Body of pancreas (tissue), 4 donors: ENCODE measurements at regions of chr14 and their contacts with region 1.

Region 1: GRCh38 chr14:51776102-51776894 is 84.1 kb upstream of the GNG2 start:
- DNase-seq: peak; percentile 27 to 49 (median 40)
- ATAC-seq: peak; percentile 50
- H3K4me3 ChIP-seq: no peak overlapping the region
- H3K27ac ChIP-seq: no peak overlapping the region
- H3K4me1 ChIP-seq: peaks cover 5% of the 10 kb centered on the region
- H3K27me3 ChIP-seq: no peaks in the 10 kb centered on the region
- CTCF ChIP-seq: peak; percentile 15 to 56 (median 42)
- POLR2A ChIP-seq: no peak

Region 2: GRCh38 chr14:51285120-51285519 is 491.2 kb before region 1 on chr14:
- intact Hi-C with region 1: loop called (anchors 5 kb)
- DNase-seq: no peak
- ATAC-seq: no peak
- H3K4me3 ChIP-seq: no peak overlapping the region
- H3K27ac ChIP-seq: no peak overlapping the region
- H3K4me1 ChIP-seq: no peaks in the 10 kb centered on the region
- H3K27me3 ChIP-seq: no peaks in the 10 kb centered on the region
- CTCF ChIP-seq: no peak
- POLR2A ChIP-seq: no peak

Region 3: GRCh38 chr14:51369814-51370213 is 406.5 kb before region 1 on chr14:
- intact Hi-C with region 1: loop called (anchors 5 kb)
- DNase-seq: peak in 3 of 4 donors; percentile 22 to 32 (median 27)
- ATAC-seq: no peak
- H3K4me3 ChIP-seq: no peak overlapping the region
- H3K27ac ChIP-seq: no peak overlapping the region
- H3K4me1 ChIP-seq: no peaks in the 10 kb centered on the region
- H3K27me3 ChIP-seq: no peaks in the 10 kb centered on the region
- CTCF ChIP-seq: peak; percentile 18 to 53 (median 44)
- POLR2A ChIP-seq: no peak

Region 4: DNA sequence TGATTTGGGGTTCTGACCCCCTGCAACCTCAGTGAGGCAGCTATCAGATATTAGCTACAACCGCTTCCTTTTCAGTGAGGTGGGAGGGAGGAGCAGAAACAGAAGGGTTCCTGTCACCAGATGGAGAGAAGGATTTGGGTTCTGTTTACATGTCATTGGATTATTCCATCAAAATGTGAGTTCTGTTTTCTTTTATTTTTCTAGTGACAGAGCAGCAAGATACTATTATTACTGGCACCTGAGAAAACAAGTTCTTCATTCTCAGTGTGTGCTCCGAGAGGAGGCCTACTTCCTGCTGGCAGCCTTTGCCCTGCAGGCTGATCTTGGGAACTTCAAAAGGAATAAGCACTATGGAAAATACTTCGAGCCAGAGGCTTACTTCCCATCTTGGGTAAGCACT is 71.8 kb before region 1 on chr14:
- intact Hi-C with region 1: no loop called
- DNase-seq: no peak
- ATAC-seq: no peak
- H3K4me3 ChIP-seq: no peak overlapping the region
- H3K27ac ChIP-seq: no peak overlapping the region
- H3K4me1 ChIP-seq: no peaks in the 10 kb centered on the region
- H3K27me3 ChIP-seq: no peaks in the 10 kb centered on the region
- CTCF ChIP-seq: no peak
- POLR2A ChIP-seq: no peak

Region 5: DNA sequence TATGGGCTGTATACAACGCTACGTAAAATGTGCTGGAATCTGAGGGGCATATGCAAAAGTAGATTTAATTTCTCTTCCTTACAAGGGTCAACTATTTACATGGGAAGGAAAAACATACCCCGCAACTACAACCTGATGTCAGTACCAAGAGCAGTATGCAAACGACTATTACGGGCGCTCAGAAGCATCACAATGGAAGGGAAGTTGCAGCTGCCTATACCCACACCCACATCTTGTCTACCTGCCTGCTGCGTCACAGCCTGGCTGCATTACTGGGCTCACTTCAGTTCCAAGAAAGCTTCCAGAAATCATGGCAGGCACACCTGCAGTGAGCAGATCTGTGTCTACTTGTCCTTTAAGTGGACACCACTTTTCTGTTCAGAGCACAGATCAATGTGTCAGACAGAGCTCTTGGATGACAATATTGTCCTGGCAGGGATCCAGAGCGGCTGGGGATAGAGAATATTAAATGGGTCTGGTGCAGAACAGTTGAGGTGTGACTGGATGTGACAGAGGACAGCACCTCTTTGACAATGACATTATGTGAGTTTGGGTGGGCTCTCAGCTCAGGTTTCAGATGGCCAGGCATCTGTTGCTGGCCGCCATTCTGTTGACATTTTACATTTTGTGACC is 42.6 kb after region 1 on chr14:
- intact Hi-C with region 1: no loop called
- DNase-seq: no peak
- ATAC-seq: no peak
- H3K4me3 ChIP-seq: no peak overlapping the region
- H3K27ac ChIP-seq: no peak overlapping the region
- H3K4me1 ChIP-seq: no peaks in the 10 kb centered on the region
- H3K27me3 ChIP-seq: no peaks in the 10 kb centered on the region
- CTCF ChIP-seq: no peak
- POLR2A ChIP-seq: no peak